ENCODE measurements at regions of chr1 and their contacts with region 1.

Region 1: DNA sequence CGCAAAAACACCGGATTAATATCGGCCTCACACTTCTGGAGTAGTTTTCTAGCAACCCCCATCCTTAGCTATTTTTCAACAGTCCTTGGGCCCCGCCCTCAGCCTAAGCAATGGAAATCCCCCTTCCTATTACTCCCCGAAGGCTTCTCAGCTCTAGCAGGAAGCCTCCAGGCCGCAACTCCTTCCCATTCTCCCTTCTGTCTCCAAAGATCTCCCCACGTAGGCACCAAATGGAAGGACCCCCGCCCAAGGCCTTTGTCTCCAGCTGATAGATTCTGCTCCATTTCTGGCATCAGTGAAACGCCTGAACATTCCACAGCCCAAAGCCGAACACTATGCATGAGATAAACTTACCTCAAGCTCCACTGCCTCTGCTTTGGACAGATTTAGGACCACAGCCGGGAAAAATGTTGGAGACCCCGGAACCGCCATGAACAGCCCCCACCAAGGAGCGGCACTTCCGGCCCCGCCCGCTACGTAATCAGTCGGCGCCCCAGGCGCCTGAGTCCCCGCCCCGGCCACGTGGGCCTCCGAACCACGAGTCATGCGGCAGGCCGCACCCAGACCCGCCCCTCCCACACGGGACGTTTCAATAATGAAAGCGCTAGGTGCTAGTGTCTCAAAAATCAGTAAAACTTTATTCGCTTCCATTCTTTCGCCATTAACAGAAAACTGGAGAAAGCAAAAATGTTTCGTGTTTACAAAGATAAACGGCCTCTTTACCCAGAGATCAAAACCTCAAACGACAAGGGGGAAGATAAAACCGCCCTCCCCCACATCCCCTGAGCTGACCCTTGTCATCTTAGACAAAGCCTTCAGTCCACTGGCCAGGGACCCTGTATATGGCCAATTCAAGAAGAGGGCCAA is at the start of gene NRAS:
- DNase-seq: peak; percentile 98
- H3K4me3 ChIP-seq: peak within 1 kb of the TSS; percentile 74
- H3K27ac ChIP-seq: peak within 1 kb of the TSS; percentile 85
- H3K4me1 ChIP-seq: peaks cover 17% of the 10 kb centered on the region
- H3K27me3 ChIP-seq: no peaks in the 10 kb centered on the region
- CTCF ChIP-seq: no peak
- total RNA-seq, gene NRAS: 40.6 to 54.8 TPM

Region 2: GRCh38 chr1:114780344-114781226 is 64.0 kb after region 1 on chr1 and contains the start of gene SIKE1:
- intact Hi-C with region 1: loop called (anchors 5 kb)
- DNase-seq: peak; percentile 97
- H3K4me3 ChIP-seq: peak within 1 kb of the TSS; percentile 83
- H3K27ac ChIP-seq: peak within 1 kb of the TSS; percentile 95
- H3K4me1 ChIP-seq: no peaks in the 10 kb centered on the region
- H3K27me3 ChIP-seq: no peaks in the 10 kb centered on the region
- CTCF ChIP-seq: no peak
- total RNA-seq, gene SIKE1: 41.6 to 42.1 TPM

Measured in colonic mucosa (tissue), 4 donors.